GM12878 (cell line): ENCODE measurements at regions of chr3 and their contacts with region 1.

Region 1: GRCh38 chr3:157626789-157627188 is 123.6 kb upstream of the VEPH1 start:
- DNase-seq: no peak
- ATAC-seq: no peak
- H3K4me3 ChIP-seq: no peak overlapping the region
- H3K27ac ChIP-seq: no peak overlapping the region
- H3K4me1 ChIP-seq: no peaks in the 10 kb centered on the region
- H3K27me3 ChIP-seq: no peaks in the 10 kb centered on the region; a peak in 1 of 4 replicates
- CTCF ChIP-seq: no peak
- EP300 ChIP-seq: no peak
- POLR2A ChIP-seq: no peak
- RAD21 ChIP-seq: no peak

Region 2: DNA sequence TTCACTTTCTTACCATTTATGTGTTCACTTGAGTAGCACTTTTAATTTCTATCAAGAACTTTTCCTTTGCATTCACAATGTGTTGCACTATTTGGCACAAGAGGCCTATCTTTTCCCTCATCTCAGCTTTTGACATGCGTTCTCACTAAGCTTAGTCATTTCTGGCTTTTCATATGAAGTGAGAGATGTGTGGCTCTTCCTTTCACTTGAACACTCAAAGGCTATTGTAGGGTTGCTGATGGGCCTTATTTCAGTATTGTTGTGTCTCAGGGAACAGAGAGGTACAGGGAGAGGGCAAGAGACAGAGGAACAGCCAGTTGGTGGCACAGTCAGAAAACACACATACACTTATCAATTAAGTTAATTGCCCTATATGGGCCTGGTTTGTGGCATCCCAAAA is 816.8 kb after region 1 on chr3:
- CTCF ChIA-PET with region 1: no interaction called
- POLR2A ChIA-PET with region 1: no interaction called
- RAD21 ChIA-PET with region 1: no interaction called
- SMC1A ChIA-PET with region 1: no interaction called
- in situ Hi-C with region 1: loop called (anchors 10 kb)
- intact Hi-C with region 1: no loop called
- DNase-seq: peak; percentile 43
- ATAC-seq: peak; percentile 96
- H3K4me3 ChIP-seq: no peak overlapping the region
- H3K27ac ChIP-seq: no peak overlapping the region
- H3K4me1 ChIP-seq: peaks cover 4% of the 10 kb centered on the region; the same call in 1 of the 2 replicates
- H3K27me3 ChIP-seq: no peaks in the 10 kb centered on the region
- CTCF ChIP-seq: no peak
- EP300 ChIP-seq: no peak
- POLR2A ChIP-seq: no peak
- RAD21 ChIP-seq: no peak